ENCODE measurements at regions of chr19 and their contacts with region 1.

Region 1: GRCh38 chr19:43668406-43669158 is 1.4 kb downstream of the PLAUR start:
- DNase-seq: peak; percentile 85 to 97 (median 91)
- ATAC-seq: peak; percentile 87
- H3K4me3 ChIP-seq: peak overlapping the region; percentile 72 to 73
- H3K4me3 Mint-ChIP-seq: peak overlapping the region; percentile 88
- H3K27ac ChIP-seq: peak overlapping the region; percentile 42 to 43
- H3K27ac Mint-ChIP-seq: peak overlapping the region; percentile 57
- H3K4me1 ChIP-seq: peaks cover 42% of the 10 kb centered on the region
- H3K4me1 Mint-ChIP-seq: peaks cover 43% of the 10 kb centered on the region
- H3K27me3 ChIP-seq: no peaks in the 10 kb centered on the region
- H3K27me3 Mint-ChIP-seq: no peaks in the 10 kb centered on the region
- CTCF ChIP-seq: no peak

Region 2: DNA sequence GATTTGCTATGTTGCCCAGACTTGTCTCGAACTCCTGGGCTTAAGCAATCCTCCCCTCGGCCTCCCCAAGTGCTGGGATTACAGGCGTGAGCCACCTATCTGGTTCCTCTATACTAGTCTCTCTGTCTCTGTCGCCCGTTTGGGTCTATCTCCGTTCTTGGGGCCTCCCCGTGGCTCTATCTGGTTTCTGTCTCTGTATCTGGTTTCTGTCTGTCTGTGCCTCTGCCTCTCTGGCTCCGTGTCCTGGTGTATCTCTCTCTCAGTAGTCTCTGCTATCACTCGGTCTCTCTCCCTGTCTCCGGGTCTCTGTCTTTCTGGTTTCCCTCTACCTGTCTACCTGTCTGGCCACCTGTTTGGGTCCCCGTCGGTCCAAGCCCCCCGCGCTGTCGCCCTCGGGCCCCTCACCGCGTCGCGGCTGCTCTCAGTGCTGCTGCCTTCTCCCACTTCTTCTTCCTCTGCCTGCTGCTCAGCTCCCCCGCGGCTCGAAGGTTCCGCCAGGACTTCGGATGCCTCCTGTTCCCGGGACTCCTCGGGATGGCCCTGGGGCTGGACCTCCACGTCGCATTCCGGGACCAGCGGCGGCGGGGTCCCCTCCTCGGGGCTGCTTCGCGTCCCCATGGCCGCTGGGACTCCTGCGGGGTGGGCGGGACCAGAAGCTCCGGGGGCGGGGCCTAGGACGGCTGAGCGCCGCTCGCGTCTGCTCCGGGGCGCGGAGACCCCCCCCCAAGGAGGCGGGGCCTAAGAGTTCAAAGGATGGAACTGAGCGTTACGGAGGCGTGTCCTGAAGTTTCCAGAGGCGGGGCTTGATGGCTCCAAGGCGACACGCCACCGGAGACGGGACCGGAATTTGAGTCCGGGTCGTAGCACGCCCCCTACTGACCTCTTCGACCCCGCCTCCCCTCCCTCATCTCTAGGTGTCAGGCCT is 164.8 kb before region 1 on chr19:
- CTCF ChIA-PET with region 1: no interaction called
- POLR2A ChIA-PET with region 1: no interaction called
- intact Hi-C with region 1: loop called in 1 of 2 experiments (anchors 1 kb)
- DNase-seq: peak; percentile 98 to 100 (median 99)
- ATAC-seq: peak; percentile 95
- H3K4me3 ChIP-seq: peak overlapping the region; percentile 97
- H3K4me3 Mint-ChIP-seq: peak overlapping the region; percentile 97
- H3K27ac ChIP-seq: peak overlapping the region; percentile 84 to 86
- H3K27ac Mint-ChIP-seq: peak overlapping the region; percentile 96
- H3K4me1 ChIP-seq: peaks cover 19% of the 10 kb centered on the region
- H3K4me1 Mint-ChIP-seq: peaks cover 34% of the 10 kb centered on the region
- H3K27me3 ChIP-seq: no peaks in the 10 kb centered on the region
- H3K27me3 Mint-ChIP-seq: no peaks in the 10 kb centered on the region
- CTCF ChIP-seq: no peak

Region 3: DNA sequence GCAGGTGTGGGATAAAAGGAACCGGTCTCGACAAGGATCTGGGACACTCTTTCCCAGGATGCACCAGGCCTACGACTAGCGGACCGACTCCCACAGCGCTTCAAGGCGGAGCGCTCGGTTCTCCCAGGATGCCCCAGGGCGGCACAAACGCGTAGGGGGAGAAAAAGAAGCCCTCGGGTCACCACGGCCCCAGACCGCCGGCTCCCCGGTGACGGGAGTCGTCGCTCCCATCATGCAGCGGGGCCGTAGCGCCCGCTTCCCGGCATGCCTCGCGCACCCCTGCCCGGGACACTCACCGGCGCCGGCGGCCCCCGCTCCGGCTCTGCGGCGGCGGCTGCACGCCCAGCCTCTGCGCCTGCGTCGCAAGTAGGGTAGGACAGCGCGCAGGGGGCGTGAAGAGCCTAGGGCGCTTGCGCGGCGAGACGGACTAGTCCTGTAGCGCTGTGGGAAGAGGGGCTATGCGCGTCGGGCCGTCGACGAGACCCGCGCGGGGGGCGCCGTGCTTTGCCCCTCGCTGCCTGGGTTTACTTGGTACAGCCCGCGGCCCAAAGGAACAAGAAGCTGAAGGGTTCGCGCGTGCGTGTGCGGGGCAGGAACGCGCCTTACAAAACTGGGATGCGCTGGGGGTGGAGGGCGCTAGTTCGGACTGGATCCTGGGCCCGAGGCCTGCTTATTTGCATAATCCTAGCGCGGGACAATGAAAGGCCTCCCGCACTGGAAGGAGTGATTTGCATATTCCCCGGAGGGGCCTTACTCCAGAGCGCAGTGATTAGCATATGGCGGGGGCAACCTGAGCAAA is 49.1 kb before region 1 on chr19 and contains the start of gene ZNF428:
- CTCF ChIA-PET with region 1: interaction called, 3 read pairs
- POLR2A ChIA-PET with region 1: no interaction called
- intact Hi-C with region 1: loop called (anchors 1 to 2 kb)
- DNase-seq: peak; percentile 61 to 95 (median 86)
- ATAC-seq: peak; percentile 88
- H3K4me3 ChIP-seq: peak within 1 kb of the TSS; percentile 97 to 98
- H3K4me3 Mint-ChIP-seq: peak within 1 kb of the TSS; percentile 96
- H3K27ac ChIP-seq: peak within 1 kb of the TSS; percentile 78 to 90
- H3K27ac Mint-ChIP-seq: peak within 1 kb of the TSS; percentile 97
- H3K4me1 ChIP-seq: peaks cover 25% of the 10 kb centered on the region
- H3K4me1 Mint-ChIP-seq: peaks cover 32% of the 10 kb centered on the region
- H3K27me3 ChIP-seq: no peaks in the 10 kb centered on the region
- H3K27me3 Mint-ChIP-seq: no peaks in the 10 kb centered on the region
- CTCF ChIP-seq: no peak
- total RNA-seq, gene ZNF428: 31.8 to 33.3 TPM

Region 4: GRCh38 chr19:43700395-43701000 is 31.9 kb after region 1 on chr19:
- CTCF ChIA-PET with region 1: no interaction called
- POLR2A ChIA-PET with region 1: no interaction called
- intact Hi-C with region 1: loop called in 1 of 2 experiments (anchors 2 kb)
- DNase-seq: peak in 2 of 9 experiments; percentile 11 to 37
- ATAC-seq: no peak
- H3K4me3 ChIP-seq: peak overlapping the region in 1 of 2 experiments; percentile 31
- H3K4me3 Mint-ChIP-seq: peak overlapping the region; percentile 80
- H3K27ac ChIP-seq: peak overlapping the region in 1 of 2 experiments; percentile 78
- H3K27ac Mint-ChIP-seq: peak overlapping the region; percentile 78
- H3K4me1 ChIP-seq: peaks cover 14% of the 10 kb centered on the region
- H3K4me1 Mint-ChIP-seq: peaks cover 24% of the 10 kb centered on the region
- H3K27me3 ChIP-seq: no peaks in the 10 kb centered on the region
- H3K27me3 Mint-ChIP-seq: peaks cover 22% of the 10 kb centered on the region
- CTCF ChIP-seq: no peak

Region 5: DNA sequence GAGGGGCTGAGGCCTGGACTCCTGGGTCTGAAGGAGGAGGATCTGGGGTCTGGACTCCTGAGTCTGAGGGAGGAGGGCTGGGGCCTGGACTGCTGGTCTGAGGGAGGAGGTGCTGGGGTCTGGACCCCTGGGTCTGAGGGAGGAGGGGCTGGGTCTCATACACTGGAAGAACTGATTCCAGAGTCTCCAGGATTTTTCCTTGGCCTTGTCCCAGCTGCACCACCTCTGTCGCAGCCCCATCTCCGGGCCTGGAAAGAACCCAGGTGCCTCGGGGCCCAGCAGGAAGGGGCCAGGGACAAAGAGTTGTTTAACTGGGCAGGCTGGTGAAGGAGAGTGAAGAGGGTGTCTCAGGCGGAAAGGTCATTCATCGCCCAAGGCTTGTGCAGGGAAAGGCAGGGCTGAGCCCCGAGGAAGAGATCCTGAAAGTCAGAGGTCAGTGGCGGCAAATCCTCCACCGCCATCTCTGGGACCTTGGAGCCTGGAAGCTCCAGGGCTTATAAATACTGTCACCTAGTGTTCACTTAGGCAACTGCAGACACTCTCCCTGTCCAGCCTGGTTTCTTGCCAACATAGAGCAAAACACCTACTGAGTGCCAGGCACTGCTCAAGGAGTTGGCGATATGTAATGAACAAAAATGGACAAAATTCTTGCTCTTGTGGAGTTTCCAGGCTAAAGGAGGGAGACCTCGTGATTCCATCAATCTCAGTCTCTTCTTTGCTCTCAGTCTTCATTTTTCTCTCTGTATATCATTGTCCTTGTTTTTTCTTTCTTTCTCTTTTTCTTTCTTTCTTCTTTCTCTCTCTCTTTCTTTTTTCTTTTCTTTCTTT is 116.6 kb after region 1 on chr19:
- CTCF ChIA-PET with region 1: no interaction called
- POLR2A ChIA-PET with region 1: no interaction called
- intact Hi-C with region 1: loop called (anchors 1 to 2 kb)
- DNase-seq: peak in 8 of 9 experiments; percentile 27 to 82 (median 52)
- ATAC-seq: peak; percentile 38
- H3K4me3 ChIP-seq: no peak overlapping the region
- H3K4me3 Mint-ChIP-seq: peak overlapping the region; percentile 56
- H3K27ac ChIP-seq: peak overlapping the region; percentile 25 to 54
- H3K27ac Mint-ChIP-seq: peak overlapping the region; percentile 96
- H3K4me1 ChIP-seq: peaks cover 36% of the 10 kb centered on the region
- H3K4me1 Mint-ChIP-seq: peaks cover 40% of the 10 kb centered on the region
- H3K27me3 ChIP-seq: peaks cover 0 to 4% of the 10 kb centered on the region in 2 experiments
- H3K27me3 Mint-ChIP-seq: peaks cover 9% of the 10 kb centered on the region
- CTCF ChIP-seq: peak; percentile 94

Measured in CD8-positive, alpha-beta T cell (primary cell).